Activated CD4-positive, alpha-beta T cell treated with anti-CD3 and anti-CD28 coated beads, Interleukin-2, amount 10 ng/mL, durations not matched to agents 7 days and 5 days (primary cell): ENCODE measurements at regions of chr2 and their contacts with region 1.

Region 1: DNA sequence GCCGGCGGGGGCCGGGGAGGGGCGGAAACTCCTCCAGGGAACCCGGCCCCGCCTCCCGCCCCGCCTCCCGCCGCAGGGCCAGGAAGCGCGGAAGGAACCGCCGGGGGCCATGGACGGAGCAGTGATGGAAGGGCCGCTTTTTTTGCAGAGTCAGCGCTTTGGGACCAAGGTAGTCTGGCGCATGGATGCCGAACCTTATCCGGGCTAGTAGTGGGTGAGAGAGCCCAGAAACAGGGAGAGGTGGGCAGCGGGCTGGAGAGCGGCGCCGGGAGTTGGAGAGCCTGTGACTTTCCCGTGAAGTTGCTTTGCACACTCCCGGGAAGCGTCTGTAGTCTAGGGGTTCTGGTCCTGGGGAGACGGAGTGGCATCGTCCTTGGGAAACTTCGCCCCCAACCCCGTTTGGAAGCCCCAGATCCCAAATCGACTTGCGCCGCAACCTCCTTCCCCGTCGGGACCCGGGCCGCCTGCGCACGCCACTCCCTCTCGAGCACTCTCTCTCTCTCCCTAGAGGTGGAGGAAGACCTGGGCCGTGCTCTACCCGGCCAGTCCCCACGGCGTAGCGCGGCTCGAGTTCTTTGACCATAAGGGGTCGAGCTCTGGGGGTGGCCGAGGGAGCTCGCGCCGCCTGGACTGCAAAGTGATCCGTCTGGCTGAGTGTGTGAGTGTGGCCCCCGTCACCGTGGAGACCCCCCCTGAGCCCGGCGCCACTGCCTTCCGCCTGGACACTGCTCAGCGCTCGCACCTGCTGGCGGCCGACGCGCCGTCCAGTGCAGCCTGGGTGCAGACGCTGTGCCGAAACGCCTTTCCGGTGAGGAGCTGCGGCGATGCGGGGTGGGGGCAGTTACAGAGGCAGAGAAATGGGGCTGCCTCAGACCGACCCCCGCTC is at the start of gene DOK1:
- DNase-seq: peak; percentile 86
- H3K4me3 Mint-ChIP-seq: peak within 1 kb of the TSS; percentile 95
- H3K27ac Mint-ChIP-seq: peak within 1 kb of the TSS; percentile 94
- H3K4me1 Mint-ChIP-seq: peaks cover 25% of the 10 kb centered on the region
- H3K27me3 Mint-ChIP-seq: peaks cover 20% of the 10 kb centered on the region
- total RNA-seq, gene DOK1: 28.0 to 34.4 TPM

Region 2: DNA sequence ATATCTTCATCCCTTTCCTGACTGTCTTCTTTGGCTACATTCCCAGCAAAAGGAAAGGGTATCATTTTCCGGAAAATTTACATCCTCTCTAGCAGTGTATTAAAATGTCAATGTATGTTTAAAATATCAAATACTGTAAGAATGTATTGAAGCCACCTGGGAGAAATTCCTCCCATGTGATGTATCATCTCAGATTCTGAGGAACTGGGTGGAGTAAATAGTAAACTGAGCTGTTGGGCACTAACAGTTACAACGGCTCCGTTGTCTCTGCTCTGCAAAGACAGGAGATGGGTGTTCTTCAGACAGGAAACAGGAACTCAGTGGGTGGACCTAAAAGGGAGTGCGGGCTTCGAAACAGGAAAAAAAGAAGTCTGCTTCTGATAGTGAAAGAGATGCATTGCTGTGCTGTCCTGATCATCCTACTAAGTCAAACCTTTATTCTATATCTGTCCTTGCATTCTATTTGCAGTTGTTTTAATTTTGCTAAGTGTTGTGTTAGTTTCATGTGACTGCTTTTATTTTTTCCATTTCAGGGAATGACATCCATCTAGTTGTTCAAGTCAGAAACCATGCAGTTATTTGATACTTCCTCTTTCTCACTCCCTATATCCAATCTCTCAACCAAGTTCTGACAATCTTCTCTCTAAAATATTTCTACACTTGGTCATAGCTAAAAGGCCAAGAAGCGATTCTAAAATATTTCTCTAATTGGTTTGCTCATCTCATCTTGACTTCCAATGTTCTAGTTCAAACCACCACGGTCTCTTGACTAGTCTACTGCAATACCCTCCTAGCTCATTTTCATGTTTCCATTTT is 19.1 kb after region 1 on chr2:
- CTCF ChIA-PET with region 1: interaction called, 36 read pairs
- POLR2A ChIA-PET with region 1: interaction called, 3 read pairs
- DNase-seq: peak; percentile 56
- H3K4me3 Mint-ChIP-seq: peak overlapping the region; percentile 28
- H3K27ac Mint-ChIP-seq: peak overlapping the region; percentile 67
- H3K4me1 Mint-ChIP-seq: peaks cover 33% of the 10 kb centered on the region
- H3K27me3 Mint-ChIP-seq: no peaks in the 10 kb centered on the region